ENCODE measurements at regions of chr13 and their contacts with region 1.

Region 1: DNA sequence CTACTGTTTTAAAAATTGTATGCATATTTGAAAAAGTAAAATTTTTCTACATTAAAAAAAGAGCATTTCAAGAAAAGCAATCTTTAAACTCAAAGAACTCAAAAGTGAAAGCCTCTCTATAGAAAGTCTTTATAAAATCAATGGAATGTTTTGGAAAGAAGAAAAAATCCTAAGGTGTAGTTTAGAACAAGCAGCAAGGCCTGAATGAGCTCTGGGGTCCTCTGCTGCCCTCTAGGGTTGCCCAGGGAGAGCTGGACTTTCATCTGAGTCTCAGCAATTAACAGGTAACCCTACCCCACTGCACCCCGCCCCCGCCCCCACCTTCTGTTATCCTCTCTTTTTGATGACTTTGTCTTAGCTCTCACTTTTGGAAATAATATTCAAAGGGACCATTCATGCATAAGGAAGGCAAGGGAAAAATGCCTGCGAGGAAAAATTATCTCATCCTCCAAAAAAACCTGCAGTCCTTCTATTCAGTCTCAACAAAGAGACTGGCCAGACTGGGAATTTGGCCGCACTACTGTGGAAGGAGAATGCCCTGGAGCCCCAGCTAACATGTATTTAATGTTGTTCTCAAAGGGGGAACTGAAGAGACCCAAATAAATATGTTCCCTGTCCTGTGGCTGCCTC is 24.1 kb downstream of the SLC25A30 start:
- DNase-seq: peak in 14 of 35 experiments; percentile 7 to 62 (median 12)
- ATAC-seq: no peak
- H3K4me3 ChIP-seq: no peak overlapping the region
- H3K4me3 Mint-ChIP-seq: no peak overlapping the region
- H3K27ac ChIP-seq: no peak overlapping the region
- H3K27ac Mint-ChIP-seq: peak overlapping the region; percentile 92 to 95
- H3K4me1 ChIP-seq: peaks cover 25 to 26% of the 10 kb centered on the region in 2 experiments
- H3K4me1 Mint-ChIP-seq: peaks cover 48 to 50% (median 50%) of the 10 kb centered on the region in 3 donors
- H3K27me3 ChIP-seq: no peaks in the 10 kb centered on the region
- H3K27me3 Mint-ChIP-seq: no peaks in the 10 kb centered on the region

Region 2: GRCh38 chr13:45231722-45232121 is 162.3 kb before region 1 on chr13:
- CTCF ChIA-PET with region 1: interaction called in 1 of 2 experiments, 11 read pairs
- POLR2A ChIA-PET with region 1: no interaction called
- DNase-seq: no peak
- ATAC-seq: no peak
- H3K4me3 ChIP-seq: no peak overlapping the region
- H3K4me3 Mint-ChIP-seq: no peak overlapping the region
- H3K27ac ChIP-seq: no peak overlapping the region
- H3K27ac Mint-ChIP-seq: no peak overlapping the region
- H3K4me1 ChIP-seq: no peaks in the 10 kb centered on the region
- H3K4me1 Mint-ChIP-seq: peaks cover 0 to 11% (median 0%) of the 10 kb centered on the region in 3 donors
- H3K27me3 ChIP-seq: no peaks in the 10 kb centered on the region
- H3K27me3 Mint-ChIP-seq: no peaks in the 10 kb centered on the region

Region 3: DNA sequence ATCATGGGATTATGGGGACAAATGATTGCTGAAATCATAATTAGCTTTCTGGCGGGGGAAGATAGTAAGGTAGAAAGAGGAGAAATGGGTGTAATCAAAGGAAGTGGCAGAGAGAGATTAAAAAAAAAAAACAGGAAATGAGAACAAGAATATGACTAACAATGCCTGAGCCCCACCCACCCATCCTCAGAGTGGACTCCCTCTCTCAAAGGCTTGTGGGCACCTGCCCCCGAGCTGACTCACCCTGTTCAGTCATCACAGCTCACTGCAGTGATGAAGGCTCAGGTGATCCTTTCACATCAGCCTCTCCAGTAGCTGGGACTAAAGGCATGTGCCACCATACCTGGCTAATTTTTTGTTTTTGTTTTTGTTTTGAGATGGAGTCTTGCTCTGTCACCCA is 26.7 kb before region 1 on chr13:
- CTCF ChIA-PET with region 1: interaction called, 11 to 13 read pairs
- POLR2A ChIA-PET with region 1: interaction called in 1 of 2 experiments, 4 read pairs
- DNase-seq: peak; percentile 71 to 93 (median 87)
- ATAC-seq: peak; percentile 99 to 100 (median 100)
- H3K4me3 ChIP-seq: no peak overlapping the region
- H3K4me3 Mint-ChIP-seq: peak overlapping the region; percentile 32 to 61 (median 57)
- H3K27ac ChIP-seq: peak overlapping the region; percentile 73
- H3K27ac Mint-ChIP-seq: peak overlapping the region; percentile 89 to 94
- H3K4me1 ChIP-seq: peaks cover 9 to 39% of the 10 kb centered on the region in 2 experiments
- H3K4me1 Mint-ChIP-seq: peaks cover 50 to 74% (median 71%) of the 10 kb centered on the region in 3 donors
- H3K27me3 ChIP-seq: no peaks in the 10 kb centered on the region
- H3K27me3 Mint-ChIP-seq: no peaks in the 10 kb centered on the region

Region 4: GRCh38 chr13:45417790-45418534 is 23.9 kb after region 1 on chr13 and contains the start of gene SLC25A30:
- CTCF ChIA-PET with region 1: interaction called in 1 of 2 experiments, 12 read pairs
- POLR2A ChIA-PET with region 1: interaction called in 1 of 2 experiments, 7 read pairs
- DNase-seq: peak; percentile 77 to 94 (median 88)
- ATAC-seq: peak; percentile 92 to 95 (median 94)
- H3K4me3 ChIP-seq: peak within 1 kb of the TSS; percentile 58 to 93
- H3K4me3 Mint-ChIP-seq: peak within 1 kb of the TSS; percentile 94 to 97 (median 95)
- H3K27ac ChIP-seq: peak within 1 kb of the TSS; percentile 89
- H3K27ac Mint-ChIP-seq: peak within 1 kb of the TSS; percentile 96 to 98
- H3K4me1 ChIP-seq: peaks cover 6 to 29% of the 10 kb centered on the region in 2 experiments
- H3K4me1 Mint-ChIP-seq: peaks cover 27 to 28% (median 28%) of the 10 kb centered on the region in 3 donors
- H3K27me3 ChIP-seq: no peaks in the 10 kb centered on the region
- H3K27me3 Mint-ChIP-seq: no peaks in the 10 kb centered on the region
- total RNA-seq, gene SLC25A30: 19.5 to 25.9 (median 24.2) TPM

Measured in T-cell (primary cell).